OCI-LY7 (cell line): ENCODE measurements at regions of chr15 and their contacts with region 1.

Region 1: GRCh38 chr15:85179700-85180099 is 198.0 kb downstream of the PDE8A start:
- DNase-seq: no peak
- H3K4me3 ChIP-seq: no peak overlapping the region
- H3K27ac ChIP-seq: no peak overlapping the region
- H3K4me1 ChIP-seq: no peaks in the 10 kb centered on the region
- CTCF ChIP-seq: no peak

Region 2: DNA sequence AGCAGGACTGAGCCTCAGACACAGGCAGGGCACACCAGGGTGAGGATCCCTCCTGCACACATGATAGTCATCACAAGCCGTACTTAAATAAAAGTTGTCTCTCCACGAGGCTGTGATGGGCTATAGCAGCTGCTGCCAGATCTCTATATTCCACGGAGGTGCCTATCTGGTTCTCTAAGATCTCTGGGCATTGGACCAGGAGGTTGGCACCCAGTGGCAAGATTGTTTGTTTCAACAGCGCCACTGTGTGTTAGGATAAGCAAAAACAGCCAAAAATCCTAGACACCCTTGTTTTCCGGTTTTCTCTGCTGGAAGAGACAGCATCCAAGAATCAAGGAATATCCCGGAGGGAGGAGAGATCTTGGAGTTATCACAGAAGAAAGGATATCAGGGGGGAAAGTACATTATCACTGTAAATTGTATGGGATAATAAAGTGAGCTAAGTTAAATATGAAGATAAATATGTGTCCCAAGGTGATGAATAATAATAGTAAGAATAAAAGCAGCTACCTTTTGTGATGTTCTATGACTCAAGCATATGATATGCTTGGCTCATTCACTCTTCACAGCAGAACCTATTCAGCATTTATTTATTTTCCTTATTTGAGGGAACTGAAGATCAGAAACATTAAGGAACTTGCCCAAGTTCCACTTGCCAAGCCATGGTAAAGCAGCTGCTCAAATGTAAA is 110.1 kb after region 1 on chr15:
- CTCF ChIA-PET with region 1: no interaction called
- POLR2A ChIA-PET with region 1: no interaction called
- intact Hi-C with region 1: loop called (anchors 10 kb)
- DNase-seq: peak; percentile 55
- H3K4me3 ChIP-seq: no peak overlapping the region
- H3K27ac ChIP-seq: no peak overlapping the region
- H3K4me1 ChIP-seq: peaks cover 9% of the 10 kb centered on the region
- CTCF ChIP-seq: peak; percentile 89

Region 3: GRCh38 chr15:85527895-85528294 is 348.2 kb after region 1 on chr15:
- CTCF ChIA-PET with region 1: no interaction called
- POLR2A ChIA-PET with region 1: no interaction called
- intact Hi-C with region 1: no loop called
- DNase-seq: no peak
- H3K4me3 ChIP-seq: no peak overlapping the region
- H3K27ac ChIP-seq: no peak overlapping the region
- H3K4me1 ChIP-seq: peaks cover 23% of the 10 kb centered on the region
- CTCF ChIP-seq: no peak

Region 4: GRCh38 chr15:85554852-85555521 is 375.3 kb after region 1 on chr15:
- CTCF ChIA-PET with region 1: no interaction called
- POLR2A ChIA-PET with region 1: no interaction called
- intact Hi-C with region 1: no loop called
- DNase-seq: peak; percentile 16
- H3K4me3 ChIP-seq: no peak overlapping the region
- H3K27ac ChIP-seq: peak overlapping the region; percentile 20
- H3K4me1 ChIP-seq: peaks cover 24% of the 10 kb centered on the region
- CTCF ChIP-seq: no peak

Region 5: GRCh38 chr15:85702321-85703101 is 522.8 kb after region 1 on chr15:
- CTCF ChIA-PET with region 1: no interaction called
- POLR2A ChIA-PET with region 1: no interaction called
- intact Hi-C with region 1: no loop called
- DNase-seq: no peak
- H3K4me3 ChIP-seq: peak overlapping the region; percentile 52
- H3K27ac ChIP-seq: peak overlapping the region; percentile 81
- H3K4me1 ChIP-seq: peaks cover 80% of the 10 kb centered on the region
- CTCF ChIP-seq: no peak